ENCODE measurements at regions of chr3 and their contacts with region 1.

Region 1: GRCh38 chr3:30779686-30780287 is 114.7 kb downstream of the GADL1 start:
- DNase-seq: no peak
- H3K4me3 Mint-ChIP-seq: no peak overlapping the region
- H3K27ac Mint-ChIP-seq: no peak overlapping the region
- H3K4me1 Mint-ChIP-seq: no peaks in the 10 kb centered on the region
- H3K27me3 Mint-ChIP-seq: peaks cover 3% of the 10 kb centered on the region

Region 2: GRCh38 chr3:30729512-30729911 is 50.3 kb before region 1 on chr3:
- CTCF ChIA-PET with region 1: no interaction called
- POLR2A ChIA-PET with region 1: no interaction called
- intact Hi-C with region 1: no loop called
- DNase-seq: no peak
- H3K4me3 Mint-ChIP-seq: no peak overlapping the region
- H3K27ac Mint-ChIP-seq: no peak overlapping the region
- H3K4me1 Mint-ChIP-seq: peaks cover 4% of the 10 kb centered on the region
- H3K27me3 Mint-ChIP-seq: no peaks in the 10 kb centered on the region

Region 3: DNA sequence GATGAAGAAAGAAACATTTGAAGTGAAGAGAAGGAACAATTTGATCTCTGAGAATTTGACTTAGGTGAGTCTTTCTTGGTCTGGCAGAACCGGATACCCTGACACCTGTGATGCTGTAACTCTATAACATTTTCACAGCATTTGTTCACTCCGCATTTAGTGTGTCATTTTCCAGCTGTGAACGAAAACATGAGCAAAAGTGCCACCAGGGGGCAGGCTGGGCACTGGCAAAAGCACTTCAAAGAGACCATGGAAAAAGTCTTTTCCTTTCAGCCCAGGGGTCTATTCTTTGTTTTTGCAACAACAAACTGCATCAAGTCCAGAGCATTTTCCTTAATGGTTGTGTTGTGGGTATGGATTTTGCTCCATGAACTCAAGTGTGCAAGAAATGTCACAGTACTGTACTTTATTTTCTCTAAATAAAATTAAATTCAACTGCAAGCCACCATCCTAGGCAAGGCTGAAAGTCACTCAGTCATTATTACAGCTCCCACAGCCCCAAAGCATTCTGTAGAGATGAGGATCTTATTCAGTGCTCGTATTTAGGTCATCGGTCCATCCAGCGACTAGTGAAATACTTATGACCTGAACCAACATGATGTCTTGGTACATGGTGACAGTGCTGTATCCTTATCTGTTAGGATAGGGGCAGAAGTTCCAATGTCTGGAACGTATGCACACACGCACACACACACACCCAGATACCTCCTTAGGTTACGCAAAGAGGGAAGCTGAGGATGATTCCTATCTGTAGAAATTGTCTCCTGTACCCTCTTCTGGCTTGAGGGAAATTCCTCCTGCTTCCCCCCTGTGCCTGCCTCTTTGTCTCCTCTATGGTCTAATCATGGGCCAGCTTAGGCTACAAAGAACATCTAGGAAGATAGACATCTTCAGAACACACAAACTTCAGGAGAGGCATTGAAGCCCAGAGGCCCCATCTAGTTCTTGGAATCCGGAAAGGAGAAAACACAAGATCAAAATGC is 10.8 kb before region 1 on chr3:
- CTCF ChIA-PET with region 1: interaction called, 19 read pairs
- POLR2A ChIA-PET with region 1: no interaction called
- intact Hi-C with region 1: no loop called
- DNase-seq: peak; percentile 81
- H3K4me3 Mint-ChIP-seq: no peak overlapping the region
- H3K27ac Mint-ChIP-seq: no peak overlapping the region
- H3K4me1 Mint-ChIP-seq: no peaks in the 10 kb centered on the region
- H3K27me3 Mint-ChIP-seq: peaks cover 7% of the 10 kb centered on the region

Region 4: DNA sequence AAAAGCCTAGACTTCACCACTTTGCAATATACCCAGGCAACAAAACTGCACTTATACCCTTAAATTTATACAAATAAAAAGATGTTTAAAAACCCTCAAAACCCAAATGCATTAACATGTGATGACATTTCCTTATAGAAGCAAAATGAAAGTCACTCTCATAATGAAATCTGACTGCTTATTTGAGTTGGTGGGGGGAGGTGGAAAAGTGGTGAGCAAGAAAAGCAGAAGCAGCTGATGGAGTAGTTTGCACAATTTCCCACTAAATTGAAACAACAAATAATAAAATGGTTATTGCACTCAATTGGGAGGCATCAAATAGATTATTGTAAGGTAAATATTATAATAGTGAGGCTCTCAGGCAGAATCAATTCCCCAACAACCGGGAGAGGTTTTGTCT is 168.6 kb after region 1 on chr3:
- CTCF ChIA-PET with region 1: no interaction called
- POLR2A ChIA-PET with region 1: no interaction called
- intact Hi-C with region 1: no loop called
- DNase-seq: no peak
- H3K4me3 Mint-ChIP-seq: no peak overlapping the region
- H3K27ac Mint-ChIP-seq: no peak overlapping the region
- H3K4me1 Mint-ChIP-seq: no peaks in the 10 kb centered on the region
- H3K27me3 Mint-ChIP-seq: no peaks in the 10 kb centered on the region

Region 5: GRCh38 chr3:31448035-31448881 is 668.5 kb after region 1 on chr3:
- CTCF ChIA-PET with region 1: no interaction called
- POLR2A ChIA-PET with region 1: no interaction called
- intact Hi-C with region 1: loop called (anchors 10 kb)
- DNase-seq: peak; percentile 55
- H3K4me3 Mint-ChIP-seq: no peak overlapping the region
- H3K27ac Mint-ChIP-seq: peak overlapping the region; percentile 23
- H3K4me1 Mint-ChIP-seq: peaks cover 21% of the 10 kb centered on the region
- H3K27me3 Mint-ChIP-seq: no peaks in the 10 kb centered on the region

Measured in activated CD4-positive, alpha-beta memory T cell treated with anti-CD3 and anti-CD28 coated beads for 36 hours (primary cell).